Naive thymus-derived CD4-positive, alpha-beta T cell (primary cell): ENCODE measurements at regions of chr9 and their contacts with region 1.

Region 1: GRCh38 chr9:22088718-22089064 is 79.6 kb upstream of the CDKN2B start:
- DNase-seq: no peak
- ATAC-seq: no peak
- H3K4me3 ChIP-seq: no peak overlapping the region
- H3K4me3 Mint-ChIP-seq: no peak overlapping the region
- H3K27ac ChIP-seq: no peak overlapping the region
- H3K27ac Mint-ChIP-seq: no peak overlapping the region
- H3K4me1 ChIP-seq: no peaks in the 10 kb centered on the region
- H3K4me1 Mint-ChIP-seq: peaks cover 0 to 5% (median 0%) of the 10 kb centered on the region in 7 donors
- H3K27me3 ChIP-seq: no peaks in the 10 kb centered on the region
- H3K27me3 Mint-ChIP-seq: peaks cover 0 to 73% (median 10%) of the 10 kb centered on the region in 5 donors

Region 2: DNA sequence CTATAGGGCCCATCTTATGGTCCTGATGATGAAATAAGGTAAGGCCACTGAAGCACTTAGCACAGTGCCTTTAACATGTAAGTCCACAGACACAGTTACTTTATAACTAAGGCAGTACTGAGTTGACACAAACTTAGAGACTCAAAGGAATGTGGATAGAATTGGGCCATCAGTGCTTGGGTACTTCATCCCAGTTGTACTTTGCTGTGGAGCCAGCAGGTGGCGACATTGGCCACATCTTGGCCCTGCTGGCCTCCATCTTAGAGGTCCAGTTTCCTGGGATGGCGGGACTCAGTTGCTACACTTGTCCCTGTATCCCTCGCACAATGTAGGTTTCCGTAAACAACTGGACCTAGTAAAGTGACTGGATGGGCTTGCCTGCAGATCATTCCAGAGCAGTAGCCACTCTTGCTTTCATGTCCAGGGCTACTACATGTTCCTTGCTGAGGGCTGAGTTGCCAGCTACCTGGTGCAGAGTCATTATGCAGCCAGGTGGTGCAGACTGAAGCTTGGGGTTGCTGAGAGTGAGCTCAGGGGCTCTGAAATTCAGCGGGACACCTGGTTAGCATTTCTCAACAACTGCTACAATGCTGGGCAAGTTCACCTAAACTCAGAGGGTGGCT is 275.6 kb before region 1 on chr9:
- CTCF ChIA-PET with region 1: no interaction called
- POLR2A ChIA-PET with region 1: no interaction called
- intact Hi-C with region 1: no loop called
- DNase-seq: peak; percentile 11 to 69 (median 50)
- ATAC-seq: peak; percentile 82
- H3K4me3 ChIP-seq: no peak overlapping the region
- H3K4me3 Mint-ChIP-seq: no peak overlapping the region
- H3K27ac ChIP-seq: no peak overlapping the region
- H3K27ac Mint-ChIP-seq: peak overlapping the region in 4 of 9 donors; percentile 6 to 81 (median 64)
- H3K4me1 ChIP-seq: peaks cover 7 to 12% of the 10 kb centered on the region in 2 donors
- H3K4me1 Mint-ChIP-seq: peaks cover 6 to 40% (median 17%) of the 10 kb centered on the region in 7 donors
- H3K27me3 ChIP-seq: no peaks in the 10 kb centered on the region
- H3K27me3 Mint-ChIP-seq: no peaks in the 10 kb centered on the region

Region 3: DNA sequence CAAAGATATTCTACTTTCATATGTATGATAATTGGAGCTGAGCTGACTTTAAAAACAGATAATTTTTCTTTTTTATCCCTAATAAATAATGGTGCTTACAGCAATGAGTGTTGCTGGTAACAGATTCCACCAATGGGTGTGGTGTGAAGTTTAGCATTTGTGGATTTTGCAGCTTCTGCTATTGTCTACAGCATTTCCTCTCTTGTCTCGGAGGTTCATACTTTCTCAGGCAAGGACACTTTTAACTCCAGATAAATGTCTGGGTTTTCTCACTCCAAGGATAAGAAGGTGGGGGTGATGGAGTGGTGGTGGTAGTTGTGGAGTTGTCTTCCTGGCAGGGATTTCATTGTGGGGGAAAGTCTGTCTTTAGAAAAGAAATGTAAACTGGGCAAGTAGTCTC is 40.4 kb after region 1 on chr9:
- CTCF ChIA-PET with region 1: no interaction called
- POLR2A ChIA-PET with region 1: no interaction called
- intact Hi-C with region 1: loop called in 1 of 2 experiments (anchors 1 kb)
- DNase-seq: no peak
- ATAC-seq: no peak
- H3K4me3 ChIP-seq: no peak overlapping the region
- H3K4me3 Mint-ChIP-seq: no peak overlapping the region
- H3K27ac ChIP-seq: no peak overlapping the region
- H3K27ac Mint-ChIP-seq: peak overlapping the region in 1 of 9 donors; percentile 47
- H3K4me1 ChIP-seq: no peaks in the 10 kb centered on the region
- H3K4me1 Mint-ChIP-seq: peaks cover 0 to 2% (median 0%) of the 10 kb centered on the region in 7 donors
- H3K27me3 ChIP-seq: no peaks in the 10 kb centered on the region
- H3K27me3 Mint-ChIP-seq: peaks cover 6 to 53% (median 6%) of the 10 kb centered on the region in 5 donors